ENCODE measurements at regions of chr12 and their contacts with region 1.

Region 1: GRCh38 chr12:6250343-6250742 is 50.1 kb downstream of the CD9 start:
- DNase-seq: no peak
- ATAC-seq: no peak
- H3K4me3 ChIP-seq: no peak overlapping the region
- H3K27ac ChIP-seq: no peak overlapping the region
- H3K4me1 ChIP-seq: no peaks in the 10 kb centered on the region
- H3K27me3 ChIP-seq: peaks cover 0 to 6% of the 10 kb centered on the region in 2 experiments; a peak in 2 of 4 replicates
- CTCF ChIP-seq: no peak
- EP300 ChIP-seq: no peak
- POLR2A ChIP-seq: no peak
- RAD21 ChIP-seq: no peak

Region 2: DNA sequence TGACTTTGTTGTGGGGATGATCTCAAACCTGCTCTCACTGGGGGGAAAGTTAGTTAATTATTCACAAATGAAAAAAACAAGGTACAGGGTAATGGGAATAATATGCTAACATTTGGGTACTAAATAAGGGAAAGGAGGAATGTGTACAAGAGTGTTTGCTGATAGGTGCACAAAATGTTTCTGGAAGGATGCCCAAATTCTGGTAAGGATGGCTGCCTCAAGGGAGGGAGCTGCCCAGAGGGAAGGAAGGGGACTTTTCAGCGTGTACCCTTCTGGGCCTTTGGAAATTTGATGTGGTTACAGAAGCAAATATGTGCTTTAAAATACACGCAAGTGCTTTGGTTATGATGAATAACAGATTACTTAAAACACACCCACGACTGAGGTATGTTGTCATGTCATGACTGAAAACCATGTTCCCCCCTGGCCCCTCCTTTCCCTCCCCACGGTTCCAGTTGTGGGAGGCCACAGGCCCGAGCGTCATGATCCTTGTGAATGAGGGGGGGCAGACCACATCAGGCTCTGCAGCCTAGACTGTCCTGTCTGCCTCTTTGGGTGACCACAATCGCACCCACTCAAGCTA is 16.9 kb after region 1 on chr12:
- CTCF ChIA-PET with region 1: no interaction called
- POLR2A ChIA-PET with region 1: interaction called, 6 read pairs
- RAD21 ChIA-PET with region 1: interaction called, 3 read pairs
- SMC1A ChIA-PET with region 1: interaction called, 14 read pairs
- in situ Hi-C with region 1: no loop called
- intact Hi-C with region 1: no loop called
- DNase-seq: no peak
- ATAC-seq: peak; percentile 77
- H3K4me3 ChIP-seq: no peak overlapping the region
- H3K27ac ChIP-seq: no peak overlapping the region
- H3K4me1 ChIP-seq: peaks cover 5% of the 10 kb centered on the region
- H3K27me3 ChIP-seq: no peaks in the 10 kb centered on the region
- CTCF ChIP-seq: no peak
- EP300 ChIP-seq: peak in 1 of 2 experiments; percentile 62; a peak in 2 of 4 replicates
- POLR2A ChIP-seq: no peak
- RAD21 ChIP-seq: no peak

Region 3: DNA sequence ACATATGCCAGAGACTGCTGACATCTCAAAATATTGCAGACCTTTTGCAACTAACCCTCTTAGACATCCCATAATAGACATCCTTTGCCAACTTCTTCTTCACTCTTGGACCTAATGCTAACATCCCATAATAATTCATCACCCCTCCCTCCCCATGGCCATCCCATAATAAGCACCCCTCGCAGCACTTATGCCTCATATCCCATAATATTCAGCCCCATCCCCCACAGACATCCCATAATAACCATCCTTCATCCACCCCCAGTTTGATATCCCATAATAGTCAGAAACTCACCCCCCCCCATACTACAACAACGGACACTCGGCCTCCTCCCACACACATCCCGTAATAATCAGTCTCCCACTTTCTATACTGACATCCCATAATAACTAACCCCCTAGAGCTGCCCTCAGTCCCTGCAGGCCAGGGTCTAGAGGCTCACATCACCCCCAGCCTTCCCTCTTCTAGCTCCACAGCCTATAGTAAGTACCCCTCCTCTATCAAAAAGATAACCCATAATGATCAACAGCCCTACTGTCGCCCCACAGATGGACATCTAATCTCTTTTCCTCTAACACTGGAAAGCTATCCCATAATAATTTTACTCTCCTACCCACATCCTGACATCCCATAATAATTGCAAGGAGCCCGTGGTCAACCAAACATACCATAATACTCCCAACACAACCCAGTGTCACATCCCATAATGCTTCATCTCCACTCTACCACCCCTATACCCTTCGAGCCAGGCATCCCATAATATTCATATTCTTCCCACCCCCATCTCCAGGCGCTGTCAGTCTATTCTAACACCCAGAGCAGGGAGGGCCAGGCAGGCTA is 357.6 kb after region 1 on chr12:
- CTCF ChIA-PET with region 1: no interaction called
- POLR2A ChIA-PET with region 1: no interaction called
- RAD21 ChIA-PET with region 1: no interaction called
- SMC1A ChIA-PET with region 1: no interaction called
- in situ Hi-C with region 1: no loop called
- intact Hi-C with region 1: no loop called
- DNase-seq: peak; percentile 67
- ATAC-seq: peak; percentile 43
- H3K4me3 ChIP-seq: no peak overlapping the region
- H3K27ac ChIP-seq: peak overlapping the region; percentile 30
- H3K4me1 ChIP-seq: peaks cover 41% of the 10 kb centered on the region
- H3K27me3 ChIP-seq: no peaks in the 10 kb centered on the region
- CTCF ChIP-seq: no peak
- EP300 ChIP-seq: no peak; a peak in 1 of 4 replicates
- POLR2A ChIP-seq: no peak
- RAD21 ChIP-seq: no peak

Region 4: DNA sequence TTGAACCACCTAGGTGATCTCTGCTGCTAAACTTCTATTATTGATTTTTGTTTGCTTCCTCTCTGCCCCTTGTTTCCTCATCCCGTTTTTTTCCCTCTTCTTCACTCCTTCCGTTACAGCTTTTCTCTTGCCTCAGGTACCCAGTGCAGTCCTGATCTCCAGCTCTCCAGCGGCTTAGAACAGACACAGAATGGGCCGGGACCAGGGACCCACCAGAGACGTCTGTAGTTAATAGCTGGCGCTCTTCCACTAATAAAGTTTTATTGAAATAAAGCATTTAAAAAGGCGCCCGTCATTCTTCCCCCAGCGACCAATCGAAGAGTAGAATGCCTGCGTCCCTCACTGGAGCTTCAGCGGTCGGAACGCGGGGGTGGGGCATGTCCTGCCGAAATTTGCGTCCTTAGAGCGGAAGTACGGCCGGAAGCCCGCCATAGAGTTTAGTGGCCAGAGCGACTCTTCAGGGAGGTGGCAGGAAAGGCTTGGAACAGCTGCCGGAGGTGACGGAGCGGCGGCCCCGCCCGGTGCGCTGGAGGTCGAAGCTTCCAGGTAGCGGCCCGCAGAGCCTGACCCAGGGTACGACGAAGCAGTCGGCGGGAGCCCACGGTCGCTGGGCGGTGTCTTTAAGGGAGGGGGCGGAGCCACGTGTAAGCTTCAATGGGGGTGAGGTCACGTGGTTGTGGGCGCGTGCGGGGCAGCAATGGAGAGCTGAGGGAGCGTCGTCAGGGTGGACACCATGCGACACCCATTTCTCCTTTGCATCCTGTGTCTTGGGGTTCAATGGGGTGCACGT is 473.5 kb after region 1 on chr12 and contains the start of gene COPS7A:
- CTCF ChIA-PET with region 1: no interaction called
- POLR2A ChIA-PET with region 1: no interaction called
- RAD21 ChIA-PET with region 1: no interaction called
- SMC1A ChIA-PET with region 1: no interaction called
- in situ Hi-C with region 1: no loop called
- intact Hi-C with region 1: no loop called
- DNase-seq: peak; percentile 97
- ATAC-seq: peak; percentile 98
- H3K4me3 ChIP-seq: peak within 1 kb of the TSS; percentile 91
- H3K27ac ChIP-seq: peak within 1 kb of the TSS; percentile 80
- H3K4me1 ChIP-seq: no peaks in the 10 kb centered on the region; the same call in 1 of the 2 replicates
- H3K27me3 ChIP-seq: no peaks in the 10 kb centered on the region
- CTCF ChIP-seq: peak in 1 of 3 experiments; percentile 10; a peak in 1 of 6 replicates
- EP300 ChIP-seq: 0 out of 4 replicates have a peak, but pooled peaks of 1 of the 2 experiments have one; percentile 11
- POLR2A ChIP-seq: peak; percentile 93
- RAD21 ChIP-seq: no peak
- polyA plus RNA-seq, gene COPS7A: 25.7 to 26.1 TPM

Measured in GM12878 (cell line).